ENCODE measurements at regions of chr9 and their contacts with region 1.

Region 1: GRCh38 chr9:115481769-115482168 is 363.8 kb upstream of the TNC start:
- DNase-seq: no peak
- H3K4me3 ChIP-seq: no peak overlapping the region
- H3K27ac ChIP-seq: no peak overlapping the region
- H3K4me1 ChIP-seq: peaks cover 0 to 6% (median 2%) of the 10 kb centered on the region in 4 experiments; a peak in 2 of 7 replicates
- H3K27me3 ChIP-seq: no peaks in the 10 kb centered on the region
- CTCF ChIP-seq: no peak
- EP300 ChIP-seq: no peak
- POLR2A ChIP-seq: peak in 1 of 2 experiments; percentile 58; a peak in 1 of 3 replicates
- RAD21 ChIP-seq: no peak

Region 2: DNA sequence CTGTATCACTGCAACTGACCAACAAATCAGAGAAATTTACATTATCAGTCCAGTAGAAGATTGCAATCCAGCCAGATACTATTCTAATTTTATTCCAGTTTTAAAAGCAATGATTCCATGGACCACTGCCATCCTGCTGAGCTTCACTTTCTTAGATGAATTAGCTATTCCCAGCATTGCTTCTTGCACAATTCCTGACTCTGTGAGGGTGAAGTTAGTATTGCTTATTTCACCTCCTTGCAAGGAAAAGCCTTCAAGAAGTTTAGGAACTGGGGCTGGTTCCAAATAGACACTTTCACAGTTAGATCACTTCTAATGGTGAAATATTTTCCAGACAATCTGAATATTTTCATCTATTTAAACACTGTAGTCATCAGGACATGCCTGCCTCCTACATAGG is 25.3 kb before region 1 on chr9:
- CTCF ChIA-PET with region 1: no interaction called
- POLR2A ChIA-PET with region 1: no interaction called
- DNase-seq: no peak
- H3K4me3 ChIP-seq: no peak overlapping the region
- H3K27ac ChIP-seq: no peak overlapping the region
- H3K4me1 ChIP-seq: peaks cover 0 to 5% (median 0%) of the 10 kb centered on the region in 4 experiments; a peak in 2 of 7 replicates
- H3K27me3 ChIP-seq: no peaks in the 10 kb centered on the region
- CTCF ChIP-seq: no peak
- EP300 ChIP-seq: no peak
- POLR2A ChIP-seq: no peak
- RAD21 ChIP-seq: no peak

Region 3: GRCh38 chr9:115469841-115470240 is 11.9 kb before region 1 on chr9:
- CTCF ChIA-PET with region 1: no interaction called
- POLR2A ChIA-PET with region 1: interaction called, 12 read pairs
- DNase-seq: no peak
- H3K4me3 ChIP-seq: no peak overlapping the region
- H3K27ac ChIP-seq: no peak overlapping the region
- H3K4me1 ChIP-seq: peaks cover 0 to 25% (median 5%) of the 10 kb centered on the region in 4 experiments; a peak in 4 of 7 replicates
- H3K27me3 ChIP-seq: no peaks in the 10 kb centered on the region
- CTCF ChIP-seq: no peak
- EP300 ChIP-seq: no peak
- POLR2A ChIP-seq: no peak
- RAD21 ChIP-seq: no peak

Region 4: DNA sequence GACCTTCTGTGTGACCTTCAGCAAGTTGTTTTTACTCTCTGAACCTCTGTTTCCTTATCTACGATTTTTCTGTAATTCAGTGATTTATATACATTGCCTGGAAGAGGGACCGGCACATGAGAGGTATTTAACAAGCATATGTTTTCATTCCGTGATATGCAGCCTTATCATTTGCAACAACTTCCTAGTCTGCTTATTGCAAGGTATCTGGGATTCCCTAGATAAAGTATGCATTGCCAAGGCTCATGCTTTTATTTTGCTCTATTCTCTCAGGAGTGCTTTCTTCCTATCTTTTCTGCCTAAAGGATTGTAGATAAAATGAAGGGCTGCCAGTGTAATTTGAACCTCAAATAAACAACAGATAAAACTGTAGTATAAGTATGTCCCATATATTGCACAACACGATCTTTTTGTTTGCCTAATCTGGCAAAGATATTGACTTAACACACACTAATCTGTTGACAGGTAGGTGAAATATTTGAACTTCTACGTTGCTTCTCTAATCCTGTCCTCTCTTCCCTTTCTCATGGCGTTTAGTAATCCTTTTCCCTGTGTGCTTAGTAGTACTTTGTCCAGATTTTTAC is 13.4 kb after region 1 on chr9:
- CTCF ChIA-PET with region 1: no interaction called
- POLR2A ChIA-PET with region 1: interaction called, 42 read pairs
- DNase-seq: no peak
- H3K4me3 ChIP-seq: no peak overlapping the region
- H3K27ac ChIP-seq: no peak overlapping the region
- H3K4me1 ChIP-seq: no peaks in the 10 kb centered on the region; a peak in 1 of 7 replicates
- H3K27me3 ChIP-seq: no peaks in the 10 kb centered on the region
- CTCF ChIP-seq: no peak
- EP300 ChIP-seq: no peak
- POLR2A ChIP-seq: no peak
- RAD21 ChIP-seq: no peak

Region 5: DNA sequence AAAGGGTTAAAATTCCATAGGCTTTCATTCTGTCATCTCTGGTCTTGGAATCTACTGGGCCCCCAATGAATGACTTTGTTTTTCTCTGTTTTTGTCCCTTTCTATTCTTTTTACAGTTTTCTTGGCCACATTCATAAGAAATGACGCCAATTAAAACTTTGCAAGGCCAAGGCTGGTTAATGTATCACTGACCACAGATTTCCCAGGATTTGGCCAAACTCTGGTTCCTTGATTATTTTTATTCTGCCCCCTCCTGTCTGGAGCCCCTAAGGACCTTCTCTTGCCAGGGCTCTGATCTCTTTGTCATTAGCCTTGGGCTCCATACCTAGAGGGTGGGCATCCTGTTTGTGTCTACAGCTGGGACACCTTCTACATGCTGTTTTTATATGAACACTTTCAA is 282.9 kb after region 1 on chr9:
- CTCF ChIA-PET with region 1: no interaction called
- POLR2A ChIA-PET with region 1: no interaction called
- DNase-seq: no peak
- H3K4me3 ChIP-seq: no peak overlapping the region
- H3K27ac ChIP-seq: no peak overlapping the region
- H3K4me1 ChIP-seq: no peaks in the 10 kb centered on the region
- H3K27me3 ChIP-seq: no peaks in the 10 kb centered on the region
- CTCF ChIP-seq: no peak
- EP300 ChIP-seq: no peak
- POLR2A ChIP-seq: no peak
- RAD21 ChIP-seq: no peak

Region 6: DNA sequence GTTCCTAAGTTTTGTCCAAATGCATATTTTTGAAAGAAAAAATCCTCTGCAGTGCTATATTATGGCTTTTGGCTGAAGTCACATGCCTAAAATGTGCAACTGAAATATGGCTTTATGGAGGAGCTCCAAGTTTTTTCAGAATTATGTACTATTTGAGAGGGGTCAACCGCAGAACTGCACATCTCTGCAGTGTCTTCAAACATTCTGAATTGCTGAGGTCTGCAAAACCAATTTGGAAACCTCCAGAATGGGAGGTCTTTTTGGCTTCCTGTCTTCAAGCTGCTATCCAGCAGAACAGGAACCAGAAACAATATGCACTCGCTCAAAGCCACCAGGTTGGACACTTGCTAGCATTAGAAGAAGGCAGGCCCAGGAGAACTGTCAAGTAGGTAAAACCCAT is 295.8 kb after region 1 on chr9:
- CTCF ChIA-PET with region 1: no interaction called
- POLR2A ChIA-PET with region 1: no interaction called
- DNase-seq: no peak
- H3K4me3 ChIP-seq: no peak overlapping the region
- H3K27ac ChIP-seq: no peak overlapping the region
- H3K4me1 ChIP-seq: no peaks in the 10 kb centered on the region
- H3K27me3 ChIP-seq: no peaks in the 10 kb centered on the region
- CTCF ChIP-seq: no peak
- EP300 ChIP-seq: no peak
- POLR2A ChIP-seq: no peak
- RAD21 ChIP-seq: no peak

Measured in H1 (cell line).